Left colon (tissue), 2 donors: ENCODE measurements at regions of chr4 and their contacts with region 1.

Region 1: GRCh38 chr4:70993181-70994068 is at the start of gene DCK:
- DNase-seq: peak; percentile 91 to 94
- ATAC-seq: peak; percentile 96
- total RNA-seq, gene DCK: 11.9 to 13.5 TPM

Region 2: DNA sequence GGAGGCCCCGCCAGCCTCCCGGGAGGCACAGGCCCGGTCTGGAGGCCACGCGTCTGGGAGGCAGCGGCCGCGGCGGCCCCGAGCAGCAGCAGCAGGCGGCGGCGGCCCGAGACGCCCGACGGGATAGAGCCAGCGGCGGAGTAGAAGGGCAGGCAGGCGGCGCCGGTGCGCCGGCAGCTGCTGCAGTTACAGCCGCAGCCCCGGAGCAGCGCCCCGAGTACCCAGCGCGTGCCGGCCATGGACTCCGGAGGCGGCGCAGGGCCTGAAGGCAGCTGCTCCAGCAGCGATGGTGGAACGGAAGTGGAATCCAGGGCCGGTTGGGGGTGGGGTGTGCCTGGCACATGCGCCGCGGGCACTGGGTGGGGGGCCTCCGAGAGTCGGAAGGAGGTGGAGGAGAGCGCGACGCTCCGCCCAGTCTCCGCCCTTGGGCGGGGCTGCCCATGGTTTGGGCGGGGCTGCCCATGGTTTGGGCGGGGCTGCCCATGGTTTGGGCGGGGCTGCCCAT is 153.8 kb before region 1 on chr4 and contains the start of gene GRSF1:
- intact Hi-C with region 1: loop called in 1 of 2 experiments (anchors 5 kb)
- DNase-seq: peak; percentile 97 to 98
- ATAC-seq: peak; percentile 90
- total RNA-seq, gene GRSF1: 79.3 to 86.0 TPM

Region 3: GRCh38 chr4:70901984-70902576 is 91.3 kb before region 1 on chr4 and contains the start of gene MOB1B:
- intact Hi-C with region 1: loop called in 1 of 2 experiments (anchors 10 kb)
- DNase-seq: peak; percentile 88 to 89
- ATAC-seq: peak; percentile 95
- total RNA-seq, gene MOB1B: 14.7 to 15.8 TPM